Activated T-helper 1 cell treated with anti-CD3 and anti-CD28 coated beads, Interleukin-12 subunit alpha, Interleukin-12 subunit beta, Interleukin-2, Interleukin-4 antibody, amounts not matched to agents 30 ng/mL and 10 ng/mL and 1 ng/mL, durations not matched to agents 14 hours and 24 hours and 36 hours (primary cell): ENCODE measurements at regions of chr2 and their contacts with region 1.

Region 1: GRCh38 chr2:171018522-171018921 is 89.5 kb downstream of the GORASP2 start:
- DNase-seq: no peak
- H3K4me3 Mint-ChIP-seq: no peak overlapping the region
- H3K27ac Mint-ChIP-seq: peak overlapping the region; percentile 6
- H3K4me1 Mint-ChIP-seq: peaks cover 21% of the 10 kb centered on the region
- H3K27me3 Mint-ChIP-seq: no peaks in the 10 kb centered on the region

Region 2: DNA sequence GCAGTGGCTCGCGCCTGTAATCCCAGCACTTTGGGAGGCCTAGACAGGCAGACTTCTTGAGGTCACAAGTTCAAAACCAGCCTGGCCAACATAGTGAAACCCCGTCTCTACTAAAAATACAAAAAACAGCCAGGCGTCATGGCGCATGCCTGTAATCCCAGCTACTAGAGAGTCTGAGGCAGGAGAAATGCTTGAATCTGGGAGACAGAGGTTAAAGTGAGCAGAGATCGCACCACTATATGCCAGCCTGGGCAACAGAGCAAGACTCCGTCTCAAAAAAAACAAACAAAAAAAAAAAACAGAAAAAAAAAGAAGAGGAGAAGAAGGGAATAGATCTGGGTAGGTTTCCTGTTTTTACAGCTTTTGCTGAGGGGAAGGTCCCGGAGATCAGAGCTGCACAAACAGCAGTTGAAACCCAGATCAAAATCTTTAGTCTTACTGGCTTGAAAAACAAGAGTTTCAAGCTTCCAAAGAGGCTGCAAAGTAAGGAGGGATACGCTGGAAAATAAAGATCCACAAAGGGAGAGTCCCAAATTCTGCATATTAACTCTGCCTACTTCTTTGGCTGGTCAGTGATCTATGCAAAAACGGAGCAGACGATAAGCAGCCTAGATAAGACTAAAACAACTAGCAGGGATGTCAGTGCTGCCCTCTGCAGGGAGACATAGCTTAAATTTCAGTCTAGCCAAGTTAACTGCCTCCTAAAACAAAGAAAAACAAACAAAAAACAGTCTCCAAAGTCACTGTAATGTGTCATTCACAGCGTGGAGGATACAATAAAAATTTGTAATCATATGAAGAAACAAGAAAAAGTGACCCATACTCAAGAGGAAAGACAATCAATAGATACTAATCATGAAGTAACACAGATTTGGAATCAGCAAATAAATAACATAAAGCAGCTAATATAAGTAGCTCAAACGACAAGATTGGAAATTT is 68.1 kb after region 1 on chr2:
- intact Hi-C with region 1: loop called (anchors 2 kb)
- DNase-seq: peak; percentile 23
- H3K4me3 Mint-ChIP-seq: peak overlapping the region; percentile 77
- H3K27ac Mint-ChIP-seq: peak overlapping the region; percentile 82
- H3K4me1 Mint-ChIP-seq: peaks cover 52% of the 10 kb centered on the region
- H3K27me3 Mint-ChIP-seq: no peaks in the 10 kb centered on the region

Region 3: GRCh38 chr2:171095014-171095582 is 76.6 kb after region 1 on chr2:
- intact Hi-C with region 1: loop called (anchors 1 kb)
- DNase-seq: no peak
- H3K4me3 Mint-ChIP-seq: no peak overlapping the region
- H3K27ac Mint-ChIP-seq: peak overlapping the region; percentile 72
- H3K4me1 Mint-ChIP-seq: peaks cover 32% of the 10 kb centered on the region
- H3K27me3 Mint-ChIP-seq: no peaks in the 10 kb centered on the region